ENCODE measurements at regions of chr1 and their contacts with region 1.

Region 1: GRCh38 chr1:197915862-197916499 is 1.2 kb upstream of the LHX9 start:
- DNase-seq: no peak
- H3K4me3 Mint-ChIP-seq: peak overlapping the region; percentile 49
- H3K27ac Mint-ChIP-seq: no peak overlapping the region
- H3K4me1 Mint-ChIP-seq: peaks cover 77% of the 10 kb centered on the region
- H3K27me3 Mint-ChIP-seq: peaks cover 92% of the 10 kb centered on the region

Region 2: GRCh38 chr1:197180252-197180878 is 735.6 kb before region 1 on chr1:
- CTCF ChIA-PET with region 1: no interaction called
- POLR2A ChIA-PET with region 1: no interaction called
- intact Hi-C with region 1: no loop called
- DNase-seq: no peak
- H3K4me3 Mint-ChIP-seq: no peak overlapping the region
- H3K27ac Mint-ChIP-seq: no peak overlapping the region
- H3K4me1 Mint-ChIP-seq: peaks cover 3% of the 10 kb centered on the region
- H3K27me3 Mint-ChIP-seq: no peaks in the 10 kb centered on the region

Region 3: GRCh38 chr1:197614916-197615692 is 300.9 kb before region 1 on chr1:
- CTCF ChIA-PET with region 1: interaction called, 6 read pairs
- POLR2A ChIA-PET with region 1: no interaction called
- intact Hi-C with region 1: loop called (anchors 1 kb)
- DNase-seq: peak; percentile 38
- H3K4me3 Mint-ChIP-seq: no peak overlapping the region
- H3K27ac Mint-ChIP-seq: no peak overlapping the region
- H3K4me1 Mint-ChIP-seq: peaks cover 1% of the 10 kb centered on the region
- H3K27me3 Mint-ChIP-seq: no peaks in the 10 kb centered on the region

Region 4: DNA sequence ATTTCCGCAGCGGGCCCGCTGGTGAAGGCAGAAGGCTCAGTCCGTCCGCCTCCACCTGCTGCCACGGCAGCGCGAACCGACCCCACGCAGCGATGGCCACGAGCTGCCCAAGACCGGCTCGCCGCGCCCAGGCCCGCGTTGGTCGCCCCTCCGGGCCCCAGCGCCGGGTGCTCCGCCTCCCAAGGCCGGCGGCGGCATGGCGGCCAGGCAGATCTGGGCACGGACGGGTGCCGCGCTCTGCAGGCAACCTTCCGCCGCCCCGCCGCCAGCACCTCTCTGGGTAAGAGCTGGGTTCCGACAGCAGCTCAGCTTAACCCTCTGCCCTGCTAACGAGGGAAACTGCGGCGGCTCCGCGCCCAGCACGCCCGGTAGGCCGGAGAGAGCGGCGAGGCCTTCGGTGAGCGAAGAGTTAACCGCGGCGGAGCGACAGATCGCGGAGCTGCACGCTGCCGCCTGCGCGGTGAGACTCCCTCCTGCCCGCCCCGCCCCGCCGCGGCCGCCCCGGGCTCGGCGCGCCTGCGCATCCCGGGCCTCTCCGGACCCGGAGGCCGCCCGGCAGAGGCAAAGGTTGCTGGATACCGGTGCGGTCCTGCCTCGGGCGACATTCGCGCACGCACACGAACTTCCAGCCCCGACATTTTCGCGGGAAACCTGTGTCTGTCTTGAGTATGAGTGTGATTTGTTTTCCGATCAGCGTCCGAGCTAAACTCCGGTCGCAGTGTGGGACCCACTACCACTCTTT is 13.4 kb before region 1 on chr1 and contains the start of gene C1orf53:
- CTCF ChIA-PET with region 1: interaction called, 5 read pairs
- POLR2A ChIA-PET with region 1: interaction called, 6 read pairs
- intact Hi-C with region 1: loop called (anchors 1 kb)
- DNase-seq: peak; percentile 85
- H3K4me3 Mint-ChIP-seq: peak within 1 kb of the TSS; percentile 77
- H3K27ac Mint-ChIP-seq: peak within 1 kb of the TSS; percentile 50
- H3K4me1 Mint-ChIP-seq: peaks cover 9% of the 10 kb centered on the region
- H3K27me3 Mint-ChIP-seq: peaks cover 41% of the 10 kb centered on the region
- total RNA-seq, gene C1orf53: 0.40 to 0.58 TPM

Region 5: GRCh38 chr1:198497346-198498102 is 581.5 kb after region 1 on chr1:
- CTCF ChIA-PET with region 1: no interaction called
- POLR2A ChIA-PET with region 1: no interaction called
- intact Hi-C with region 1: no loop called
- DNase-seq: no peak
- H3K4me3 Mint-ChIP-seq: no peak overlapping the region
- H3K27ac Mint-ChIP-seq: no peak overlapping the region
- H3K4me1 Mint-ChIP-seq: peaks cover 13% of the 10 kb centered on the region
- H3K27me3 Mint-ChIP-seq: no peaks in the 10 kb centered on the region

Measured in activated CD4-positive, alpha-beta memory T cell treated with anti-CD3 and anti-CD28 coated beads for 36 hours (primary cell).